Common myeloid progenitor, CD34-positive (primary cell): ENCODE measurements at regions of chr11 and their contacts with region 1.

Region 1: DNA sequence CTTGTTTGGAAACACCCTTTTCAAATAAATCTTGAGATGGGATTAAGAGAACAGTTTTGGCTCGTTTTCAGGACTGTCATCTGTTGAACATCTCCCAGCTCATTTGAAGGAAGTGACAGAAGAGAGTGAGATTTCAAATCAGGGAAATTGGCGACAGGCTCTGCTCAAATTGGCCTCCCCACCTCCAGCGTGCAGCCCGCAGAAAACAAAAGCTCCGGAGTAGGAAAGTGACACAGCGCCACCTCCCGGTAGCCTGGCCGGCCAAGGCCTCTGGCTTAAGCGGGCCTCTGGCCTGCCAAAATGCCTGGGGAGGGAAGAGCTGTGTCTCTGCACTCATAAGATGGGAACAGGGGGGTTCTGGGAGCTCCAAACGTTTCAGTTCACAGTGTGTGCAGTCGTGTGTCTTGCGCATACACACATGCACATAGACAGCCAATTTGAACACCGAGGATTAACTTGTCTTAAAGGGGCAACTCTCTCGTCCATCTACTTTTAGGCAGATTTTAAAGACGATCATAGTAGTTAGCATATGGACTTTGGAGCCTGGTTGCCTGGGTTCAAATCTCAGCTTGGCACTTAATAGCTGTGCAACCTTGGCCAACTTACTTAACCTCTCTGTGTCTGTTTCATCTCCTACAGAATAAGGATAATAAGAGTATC is 132.7 kb upstream of the RCN1 start:
- DNase-seq: peak; percentile 18 to 59 (median 49)
- H3K4me3 ChIP-seq: no peak overlapping the region
- H3K27ac ChIP-seq: no peak overlapping the region
- H3K4me1 ChIP-seq: no peaks in the 10 kb centered on the region
- H3K27me3 ChIP-seq: peaks cover 0 to 6% (median 0%) of the 10 kb centered on the region in 5 experiments

Region 2: DNA sequence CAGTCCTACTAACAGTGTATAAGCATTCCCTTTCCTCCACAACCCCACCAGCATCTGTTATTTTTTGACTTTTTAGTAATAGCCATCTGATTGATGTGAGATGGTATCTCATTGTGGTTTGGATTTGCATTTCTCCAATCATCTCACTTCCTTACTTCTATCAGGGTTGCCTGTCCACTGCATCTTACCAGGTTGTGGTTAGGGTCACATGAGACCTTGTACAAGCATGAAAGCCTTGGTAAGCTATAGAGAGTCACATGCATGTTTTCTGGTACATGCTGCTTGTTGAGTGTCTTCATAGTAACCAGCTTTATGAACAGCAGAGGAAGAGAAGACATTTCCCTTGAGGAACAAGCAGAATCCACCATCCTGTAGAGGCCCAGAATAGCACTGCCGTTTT is 44.2 kb before region 1 on chr11:
- CTCF ChIA-PET with region 1: no interaction called
- POLR2A ChIA-PET with region 1: no interaction called
- DNase-seq: no peak
- H3K4me3 ChIP-seq: no peak overlapping the region
- H3K27ac ChIP-seq: no peak overlapping the region
- H3K4me1 ChIP-seq: no peaks in the 10 kb centered on the region
- H3K27me3 ChIP-seq: peaks cover 0 to 4% (median 0%) of the 10 kb centered on the region in 5 experiments

Region 3: GRCh38 chr11:31972623-31973022 is 14.4 kb after region 1 on chr11:
- CTCF ChIA-PET with region 1: interaction called, 11 read pairs
- POLR2A ChIA-PET with region 1: no interaction called
- DNase-seq: no peak
- H3K4me3 ChIP-seq: no peak overlapping the region
- H3K27ac ChIP-seq: no peak overlapping the region
- H3K4me1 ChIP-seq: no peaks in the 10 kb centered on the region
- H3K27me3 ChIP-seq: peaks cover 0 to 34% (median 4%) of the 10 kb centered on the region in 5 experiments

Region 4: GRCh38 chr11:32023370-32024305 is 65.4 kb after region 1 on chr11:
- CTCF ChIA-PET with region 1: no interaction called
- POLR2A ChIA-PET with region 1: no interaction called
- DNase-seq: no peak
- H3K4me3 ChIP-seq: no peak overlapping the region
- H3K27ac ChIP-seq: no peak overlapping the region
- H3K4me1 ChIP-seq: no peaks in the 10 kb centered on the region
- H3K27me3 ChIP-seq: peaks cover 0 to 2% (median 0%) of the 10 kb centered on the region in 5 experiments

Region 5: GRCh38 chr11:32090545-32091373 is 132.6 kb after region 1 on chr11 and contains the start of gene RCN1:
- CTCF ChIA-PET with region 1: no interaction called
- POLR2A ChIA-PET with region 1: no interaction called
- DNase-seq: peak; percentile 59 to 88 (median 82)
- H3K4me3 ChIP-seq: peak within 1 kb of the TSS; percentile 73 to 90 (median 81)
- H3K27ac ChIP-seq: peak within 1 kb of the TSS; percentile 69 to 88
- H3K4me1 ChIP-seq: peaks cover 5 to 41% (median 31%) of the 10 kb centered on the region in 4 experiments
- H3K27me3 ChIP-seq: peaks cover 0 to 2% (median 0%) of the 10 kb centered on the region in 5 experiments